Esophagus muscularis mucosa (tissue), 4 donors: ENCODE measurements at regions of chr12 and their contacts with region 1.

Region 1: GRCh38 chr12:51083126-51083833 is at the start of gene CSRNP2:
- DNase-seq: peak; percentile 99
- H3K4me3 ChIP-seq: peak within 1 kb of the TSS; percentile 87 to 97 (median 92)
- H3K27ac ChIP-seq: peak within 1 kb of the TSS; percentile 95 to 99 (median 96)
- H3K4me1 ChIP-seq: peaks cover 12 to 37% (median 35%) of the 10 kb centered on the region in 4 donors
- H3K27me3 ChIP-seq: peaks cover 0 to 3% (median 0%) of the 10 kb centered on the region in 4 donors
- CTCF ChIP-seq: peak in 2 of 3 experiments; percentile 7 to 29
- EP300 ChIP-seq: no peak
- POLR2A ChIP-seq: peak; percentile 99
- total RNA-seq, gene CSRNP2: 20.3 to 31.5 (median 25.5) TPM

Region 2: GRCh38 chr12:51047655-51048540 is 35.4 kb before region 1 on chr12 and contains the start of gene LETMD1:
- intact Hi-C with region 1: loop called (anchors 2 kb)
- DNase-seq: peak; percentile 98
- H3K4me3 ChIP-seq: peak within 1 kb of the TSS; percentile 64 to 78 (median 76)
- H3K27ac ChIP-seq: peak within 1 kb of the TSS; percentile 91 to 97 (median 93)
- H3K4me1 ChIP-seq: peaks cover 18 to 30% (median 26%) of the 10 kb centered on the region in 4 donors
- H3K27me3 ChIP-seq: no peaks in the 10 kb centered on the region
- CTCF ChIP-seq: peak; percentile 93 to 95 (median 94)
- EP300 ChIP-seq: no peak
- POLR2A ChIP-seq: peak; percentile 28
- total RNA-seq, gene LETMD1: 35.6 to 43.2 (median 42.1) TPM

Region 3: GRCh38 chr12:51217968-51218606 is 134.8 kb after region 1 on chr12 and contains the start of gene POU6F1:
- intact Hi-C with region 1: loop called (anchors 5 kb)
- DNase-seq: peak; percentile 93
- H3K4me3 ChIP-seq: peak within 1 kb of the TSS; percentile 80 to 98 (median 96)
- H3K27ac ChIP-seq: peak within 1 kb of the TSS; percentile 97 to 100 (median 99)
- H3K4me1 ChIP-seq: peaks cover 17 to 29% (median 25%) of the 10 kb centered on the region in 4 donors
- H3K27me3 ChIP-seq: no peaks in the 10 kb centered on the region
- CTCF ChIP-seq: peak; percentile 49 to 83 (median 49)
- EP300 ChIP-seq: no peak
- POLR2A ChIP-seq: no peak
- total RNA-seq, gene POU6F1: 13.3 to 27.2 (median 16.9) TPM